Naive thymus-derived CD4-positive, alpha-beta T cell (primary cell): ENCODE measurements at regions of chr10 and their contacts with region 1.

Region 1: DNA sequence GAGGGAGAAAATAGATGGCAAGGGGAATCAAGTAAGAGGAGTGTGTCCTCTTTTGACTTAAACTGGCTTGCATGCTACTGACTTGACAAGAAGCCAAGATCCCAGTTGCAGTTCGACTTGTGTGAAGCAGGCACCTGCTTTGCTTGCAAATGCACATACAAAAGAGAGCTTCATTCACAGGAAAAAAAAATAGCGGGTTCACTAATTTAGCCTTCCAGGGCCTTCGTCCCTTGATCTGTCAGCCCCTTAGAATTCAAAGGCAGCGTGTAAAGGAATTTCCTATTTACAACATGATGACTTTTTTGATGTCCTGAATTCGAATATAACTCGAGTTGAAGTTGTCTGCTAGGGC is 192.1 kb downstream of the CELF2 start:
- DNase-seq: peak in 4 of 9 donors; percentile 26 to 44 (median 31)
- ATAC-seq: no peak
- H3K4me3 ChIP-seq: peak overlapping the region; percentile 39
- H3K4me3 Mint-ChIP-seq: peak overlapping the region; percentile 73 to 89 (median 82)
- H3K27ac ChIP-seq: peak overlapping the region; percentile 70
- H3K27ac Mint-ChIP-seq: peak overlapping the region; percentile 81 to 94 (median 87)
- H3K4me1 ChIP-seq: peaks cover 75 to 93% of the 10 kb centered on the region in 2 donors
- H3K4me1 Mint-ChIP-seq: peaks cover 76 to 100% (median 98%) of the 10 kb centered on the region in 7 donors
- H3K27me3 ChIP-seq: no peaks in the 10 kb centered on the region
- H3K27me3 Mint-ChIP-seq: no peaks in the 10 kb centered on the region

Region 2: DNA sequence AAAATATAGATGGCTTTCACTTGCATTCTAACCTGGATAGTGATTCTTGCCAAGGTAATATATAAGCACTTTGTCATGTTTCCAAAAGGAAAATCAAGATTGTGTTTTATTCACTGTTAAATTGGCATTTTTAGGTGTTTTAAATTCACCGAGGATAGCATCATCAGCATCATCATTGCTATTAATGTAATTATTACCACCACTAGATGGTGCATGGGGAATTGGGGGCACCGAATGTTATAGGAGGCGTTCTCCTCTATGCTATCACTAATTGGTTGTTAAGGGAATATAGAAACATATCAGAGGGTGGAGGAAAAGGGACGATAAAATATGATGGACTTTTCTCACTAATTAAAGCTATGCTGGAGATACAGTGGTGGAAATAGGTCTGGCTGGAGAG is 96.7 kb before region 1 on chr10:
- CTCF ChIA-PET with region 1: interaction called, 3 read pairs
- POLR2A ChIA-PET with region 1: interaction called, 4 read pairs
- intact Hi-C with region 1: loop called in 1 of 2 experiments (anchors 1 kb)
- DNase-seq: peak in 7 of 9 donors; percentile 48 to 69 (median 65)
- ATAC-seq: peak; percentile 97
- H3K4me3 ChIP-seq: no peak overlapping the region
- H3K4me3 Mint-ChIP-seq: peak overlapping the region in 9 of 10 donors; percentile 12 to 85 (median 63)
- H3K27ac ChIP-seq: peak overlapping the region; percentile 9
- H3K27ac Mint-ChIP-seq: peak overlapping the region in 8 of 9 donors; percentile 0 to 92 (median 72)
- H3K4me1 ChIP-seq: peaks cover 0 to 9% of the 10 kb centered on the region in 2 donors
- H3K4me1 Mint-ChIP-seq: peaks cover 10 to 56% (median 38%) of the 10 kb centered on the region in 7 donors
- H3K27me3 ChIP-seq: no peaks in the 10 kb centered on the region
- H3K27me3 Mint-ChIP-seq: peaks cover 0 to 5% (median 0%) of the 10 kb centered on the region in 5 donors

Region 3: GRCh38 chr10:11197266-11197712 is 12.5 kb before region 1 on chr10:
- CTCF ChIA-PET with region 1: interaction called, 9 read pairs
- POLR2A ChIA-PET with region 1: no interaction called
- intact Hi-C with region 1: loop called in 1 of 2 experiments (anchors 1 kb)
- DNase-seq: no peak
- ATAC-seq: peak; percentile 69
- H3K4me3 ChIP-seq: no peak overlapping the region
- H3K4me3 Mint-ChIP-seq: peak overlapping the region in 9 of 10 donors; percentile 6 to 66 (median 36)
- H3K27ac ChIP-seq: peak overlapping the region; percentile 12
- H3K27ac Mint-ChIP-seq: peak overlapping the region in 8 of 9 donors; percentile 38 to 88 (median 86)
- H3K4me1 ChIP-seq: peaks cover 51 to 73% of the 10 kb centered on the region in 2 donors
- H3K4me1 Mint-ChIP-seq: peaks cover 79 to 97% (median 82%) of the 10 kb centered on the region in 7 donors
- H3K27me3 ChIP-seq: no peaks in the 10 kb centered on the region
- H3K27me3 Mint-ChIP-seq: no peaks in the 10 kb centered on the region